Common myeloid progenitor, CD34-positive (primary cell): ENCODE measurements at regions of chr12 and their contacts with region 1.

Region 1: DNA sequence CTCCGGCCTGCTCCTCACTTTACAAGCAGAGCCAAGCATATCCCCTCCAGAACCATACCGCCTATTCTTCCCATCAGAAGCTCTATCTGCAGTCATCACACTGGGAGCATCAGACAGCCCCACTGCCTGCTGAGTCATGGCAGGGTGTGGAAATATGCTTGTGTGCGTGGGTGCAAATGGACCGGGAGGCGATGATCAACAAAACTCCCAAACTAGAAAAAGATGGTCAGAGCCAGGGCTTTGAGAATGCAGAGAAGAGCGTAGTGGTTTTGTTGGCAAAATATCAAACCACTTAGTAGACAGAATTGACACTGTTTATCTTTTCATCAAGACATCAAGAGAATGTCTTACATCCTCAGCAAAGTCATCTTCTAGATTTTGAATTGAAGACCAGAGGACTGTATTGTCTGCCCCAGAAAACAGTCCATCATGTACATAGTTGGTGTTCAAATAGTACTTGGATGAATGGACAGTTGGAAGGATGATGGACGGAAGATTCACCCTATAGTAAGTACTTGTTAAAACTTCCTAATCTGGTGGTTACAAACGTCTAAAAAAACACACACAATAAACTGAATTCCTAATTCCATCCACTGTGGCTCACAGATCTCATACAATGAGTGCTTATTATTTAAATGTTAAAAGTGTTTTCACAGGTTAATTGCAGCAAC is 54.9 kb downstream of the VWF start:
- DNase-seq: peak in 2 of 3 donors; percentile 56 to 58
- H3K4me3 ChIP-seq: no peak overlapping the region
- H3K27ac ChIP-seq: no peak overlapping the region
- H3K4me1 ChIP-seq: peaks cover 7 to 38% (median 27%) of the 10 kb centered on the region in 4 experiments
- H3K27me3 ChIP-seq: no peaks in the 10 kb centered on the region

Region 2: DNA sequence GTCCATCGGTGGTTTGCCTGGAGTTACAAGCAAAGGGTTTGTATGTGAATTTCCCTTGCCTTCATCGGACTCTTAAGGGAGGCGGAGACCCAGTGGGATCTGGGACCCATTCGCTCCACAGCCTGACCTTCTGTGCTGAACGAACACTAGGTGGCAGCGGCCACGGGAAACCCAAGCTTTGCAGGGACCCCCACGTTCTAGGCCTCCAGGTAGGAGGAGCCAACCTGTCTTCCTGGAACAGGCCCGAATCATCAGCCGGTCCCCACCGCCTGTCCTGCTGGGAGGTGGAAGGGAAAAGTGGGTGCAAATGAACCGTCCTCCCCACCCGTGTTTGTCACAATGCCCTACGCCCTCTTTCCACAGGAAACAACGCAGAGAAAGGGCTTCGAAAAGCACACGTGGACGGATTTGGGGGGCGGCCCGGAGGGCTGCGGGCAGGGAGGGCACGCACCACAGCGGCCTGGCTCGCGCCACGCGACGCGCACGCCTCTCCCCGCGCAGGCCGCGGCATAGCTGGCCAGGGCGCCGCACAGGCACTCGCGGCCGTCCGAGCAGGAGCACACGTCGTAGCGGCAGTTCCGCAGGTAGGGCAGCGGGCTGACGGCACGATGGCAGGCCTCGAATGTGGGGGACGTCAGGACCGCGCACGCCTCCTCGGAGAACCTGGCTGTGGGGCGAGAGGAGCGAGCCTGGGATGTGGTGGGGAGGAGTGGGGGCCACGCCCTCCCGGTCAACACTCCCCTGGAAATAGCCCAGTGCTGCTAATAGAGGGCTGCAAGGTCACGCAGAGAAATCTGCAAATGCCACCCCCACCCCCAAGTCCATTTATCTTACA is 12.9 kb before region 1 on chr12:
- CTCF ChIA-PET with region 1: interaction called, 14 read pairs
- POLR2A ChIA-PET with region 1: no interaction called
- DNase-seq: peak; percentile 73 to 81 (median 79)
- H3K4me3 ChIP-seq: peak overlapping the region in 4 of 7 experiments; percentile 0 to 68 (median 36)
- H3K27ac ChIP-seq: no peak overlapping the region
- H3K4me1 ChIP-seq: peaks cover 0 to 21% (median 9%) of the 10 kb centered on the region in 4 experiments
- H3K27me3 ChIP-seq: no peaks in the 10 kb centered on the region

Region 3: DNA sequence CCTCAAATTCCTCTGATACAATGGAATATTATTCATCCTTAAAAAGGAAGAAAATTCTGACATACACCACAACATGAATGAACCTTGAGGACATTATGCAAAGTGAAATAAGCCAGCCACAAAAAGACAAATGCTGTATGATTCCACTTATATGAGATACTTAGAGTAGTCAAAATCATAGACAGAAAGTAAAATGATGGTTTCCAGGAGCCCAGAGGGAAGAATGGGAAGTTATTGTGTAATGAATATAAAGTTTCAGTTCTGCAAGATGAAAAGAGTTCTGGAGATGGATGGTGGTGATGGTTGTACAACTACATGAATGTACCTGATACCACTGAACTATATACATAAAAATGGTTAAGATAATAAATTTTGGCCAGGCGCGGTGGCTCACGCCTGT is 36.6 kb after region 1 on chr12:
- CTCF ChIA-PET with region 1: no interaction called
- POLR2A ChIA-PET with region 1: no interaction called
- DNase-seq: no peak
- H3K4me3 ChIP-seq: no peak overlapping the region
- H3K27ac ChIP-seq: no peak overlapping the region
- H3K4me1 ChIP-seq: peaks cover 0 to 17% (median 14%) of the 10 kb centered on the region in 4 experiments
- H3K27me3 ChIP-seq: no peaks in the 10 kb centered on the region

Region 4: DNA sequence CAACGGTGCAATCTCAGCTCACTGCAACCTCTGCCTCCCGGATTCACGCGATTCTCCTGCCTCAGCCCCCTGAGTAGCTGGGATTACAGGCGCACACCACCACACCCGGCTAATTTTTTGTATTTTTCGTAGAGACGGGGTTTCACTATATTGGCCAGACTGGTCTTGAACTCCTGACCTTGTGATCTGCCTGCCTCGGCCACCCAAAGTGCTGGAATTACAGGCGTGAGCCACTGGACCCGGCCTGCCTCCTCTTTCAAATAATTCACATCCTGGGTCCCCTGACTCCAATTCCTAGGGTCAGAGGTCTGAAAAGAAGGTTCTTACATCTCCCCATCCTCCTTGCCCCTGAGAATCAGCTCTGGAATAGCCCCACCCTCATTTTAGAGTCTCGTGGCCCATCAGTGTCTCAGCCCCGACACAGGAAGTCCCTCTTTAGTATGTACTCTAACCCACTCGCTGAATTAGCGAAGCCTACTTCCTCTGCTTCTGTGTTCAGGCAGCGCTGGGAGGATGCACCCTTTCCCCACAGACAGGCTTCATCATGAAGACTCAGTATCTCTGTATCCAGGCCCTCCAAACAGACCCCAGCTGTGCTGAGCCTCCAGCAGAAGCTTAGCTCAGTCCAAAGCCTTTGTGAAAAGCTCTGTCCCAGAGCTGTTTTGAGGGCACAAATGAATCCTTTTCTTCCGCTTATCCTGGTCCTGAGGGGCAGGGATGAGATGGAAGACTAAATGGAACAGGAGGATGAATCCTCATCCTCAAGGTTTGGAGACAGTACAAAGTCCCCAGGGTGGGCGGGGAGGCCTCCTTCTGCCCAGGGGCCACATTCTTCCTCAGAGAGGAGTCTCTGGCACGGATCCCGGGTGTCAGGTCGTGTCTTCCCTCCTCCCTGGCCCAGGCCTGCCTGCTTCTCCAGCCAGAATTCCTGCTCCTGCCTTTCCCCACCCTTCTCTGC is 562.7 kb after region 1 on chr12:
- CTCF ChIA-PET with region 1: no interaction called
- POLR2A ChIA-PET with region 1: no interaction called
- DNase-seq: peak in 2 of 3 donors; percentile 76 to 85
- H3K4me3 ChIP-seq: no peak overlapping the region
- H3K27ac ChIP-seq: peak overlapping the region in 1 of 2 experiments; percentile 27
- H3K4me1 ChIP-seq: peaks cover 9 to 49% (median 40%) of the 10 kb centered on the region in 4 experiments
- H3K27me3 ChIP-seq: no peaks in the 10 kb centered on the region